ENCODE measurements at regions of chr17 and their contacts with region 1.

Region 1: GRCh38 chr17:64496786-64497564 is at the start of gene POLG2:
- DNase-seq: peak; percentile 93
- CTCF ChIP-seq: peak; percentile 67

Region 2: DNA sequence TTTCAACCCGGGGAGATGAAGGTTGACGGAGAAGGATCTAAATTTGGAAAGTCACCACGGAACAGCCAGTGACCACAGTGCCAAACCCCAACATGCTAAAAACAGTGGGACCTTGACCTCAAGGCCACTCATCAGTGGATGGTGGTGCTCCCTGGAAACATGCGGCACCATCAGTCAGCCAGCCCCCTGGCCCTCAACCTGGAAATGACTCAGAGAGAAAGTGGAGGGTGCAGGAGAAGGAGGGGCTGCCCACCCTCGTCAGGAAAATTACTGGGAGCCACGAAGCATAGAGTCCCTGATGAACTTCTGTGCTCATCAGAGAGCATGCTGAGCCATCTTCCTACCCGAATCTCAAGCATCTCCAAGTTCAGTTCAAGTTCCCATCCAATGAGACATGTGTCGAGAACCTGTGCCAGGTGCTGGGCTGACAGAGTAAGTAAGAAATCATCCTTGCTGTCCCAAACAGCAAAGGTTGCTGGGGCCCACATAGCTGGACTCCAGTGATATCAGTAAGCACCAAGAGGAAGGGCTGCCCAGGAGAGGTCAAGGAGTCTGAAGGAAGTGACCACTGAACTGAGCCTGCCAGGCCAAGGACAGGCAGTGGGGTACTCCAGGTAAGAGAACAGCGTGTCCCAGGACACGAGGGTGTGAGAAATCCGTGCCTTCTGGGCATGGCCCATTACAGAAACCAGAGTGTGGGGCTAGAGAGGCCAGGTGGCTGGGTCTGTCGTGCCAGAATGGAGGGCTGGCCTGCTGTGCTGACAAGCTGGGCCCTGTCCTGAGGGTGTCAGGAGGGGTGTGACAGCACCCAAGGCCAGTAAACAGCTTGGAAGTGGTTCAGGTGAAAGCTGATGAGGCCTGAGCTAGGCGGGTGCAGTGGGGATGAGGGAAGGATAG is 111.5 kb before region 1 on chr17:
- CTCF ChIA-PET with region 1: no interaction called
- POLR2A ChIA-PET with region 1: no interaction called
- DNase-seq: peak; percentile 43
- CTCF ChIP-seq: no peak

Region 3: GRCh38 chr17:64459284-64459747 is 37.7 kb before region 1 on chr17:
- CTCF ChIA-PET with region 1: interaction called, 3 read pairs
- POLR2A ChIA-PET with region 1: interaction called, 10 read pairs
- DNase-seq: no peak
- CTCF ChIP-seq: no peak

Region 4: GRCh38 chr17:64555281-64555680 is 58.3 kb after region 1 on chr17:
- CTCF ChIA-PET with region 1: no interaction called
- POLR2A ChIA-PET with region 1: no interaction called
- DNase-seq: no peak
- CTCF ChIP-seq: no peak